Ovary (tissue), 10 donors: ENCODE measurements at regions of chr14 and their contacts with region 1.

Region 1: DNA sequence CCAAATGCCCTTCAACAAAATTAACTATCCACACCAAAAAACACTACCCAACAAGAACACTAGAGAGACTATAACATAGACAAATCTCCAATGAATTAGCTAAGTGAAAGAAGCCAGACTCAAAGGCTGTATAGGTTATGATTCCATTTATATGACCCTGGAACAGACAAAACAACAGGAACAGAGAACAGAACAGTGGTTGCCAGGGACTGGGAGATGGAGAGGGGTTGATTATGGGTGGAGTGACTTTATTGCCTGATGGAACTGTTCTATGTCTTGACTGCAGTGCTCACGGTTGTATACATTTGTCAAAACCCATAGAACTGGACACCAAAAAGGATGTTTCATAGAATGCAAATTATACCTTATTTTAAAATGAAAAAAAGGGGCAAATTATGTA is 14.9 kb downstream of the CATSPERB start:
- DNase-seq: no peak
- H3K4me3 ChIP-seq: no peak overlapping the region
- H3K27ac ChIP-seq: no peak overlapping the region
- H3K4me1 ChIP-seq: no peaks in the 10 kb centered on the region
- H3K27me3 ChIP-seq: no peaks in the 10 kb centered on the region
- CTCF ChIP-seq: no peak
- EP300 ChIP-seq: no peak
- POLR2A ChIP-seq: no peak

Region 2: GRCh38 chr14:91649930-91650329 is 67.1 kb before region 1 on chr14:
- intact Hi-C with region 1: no loop called
- DNase-seq: no peak
- H3K4me3 ChIP-seq: no peak overlapping the region
- H3K27ac ChIP-seq: no peak overlapping the region
- H3K4me1 ChIP-seq: no peaks in the 10 kb centered on the region
- H3K27me3 ChIP-seq: no peaks in the 10 kb centered on the region
- CTCF ChIP-seq: peak in 2 of 3 donors; percentile 36 to 49
- EP300 ChIP-seq: no peak
- POLR2A ChIP-seq: no peak

Region 3: DNA sequence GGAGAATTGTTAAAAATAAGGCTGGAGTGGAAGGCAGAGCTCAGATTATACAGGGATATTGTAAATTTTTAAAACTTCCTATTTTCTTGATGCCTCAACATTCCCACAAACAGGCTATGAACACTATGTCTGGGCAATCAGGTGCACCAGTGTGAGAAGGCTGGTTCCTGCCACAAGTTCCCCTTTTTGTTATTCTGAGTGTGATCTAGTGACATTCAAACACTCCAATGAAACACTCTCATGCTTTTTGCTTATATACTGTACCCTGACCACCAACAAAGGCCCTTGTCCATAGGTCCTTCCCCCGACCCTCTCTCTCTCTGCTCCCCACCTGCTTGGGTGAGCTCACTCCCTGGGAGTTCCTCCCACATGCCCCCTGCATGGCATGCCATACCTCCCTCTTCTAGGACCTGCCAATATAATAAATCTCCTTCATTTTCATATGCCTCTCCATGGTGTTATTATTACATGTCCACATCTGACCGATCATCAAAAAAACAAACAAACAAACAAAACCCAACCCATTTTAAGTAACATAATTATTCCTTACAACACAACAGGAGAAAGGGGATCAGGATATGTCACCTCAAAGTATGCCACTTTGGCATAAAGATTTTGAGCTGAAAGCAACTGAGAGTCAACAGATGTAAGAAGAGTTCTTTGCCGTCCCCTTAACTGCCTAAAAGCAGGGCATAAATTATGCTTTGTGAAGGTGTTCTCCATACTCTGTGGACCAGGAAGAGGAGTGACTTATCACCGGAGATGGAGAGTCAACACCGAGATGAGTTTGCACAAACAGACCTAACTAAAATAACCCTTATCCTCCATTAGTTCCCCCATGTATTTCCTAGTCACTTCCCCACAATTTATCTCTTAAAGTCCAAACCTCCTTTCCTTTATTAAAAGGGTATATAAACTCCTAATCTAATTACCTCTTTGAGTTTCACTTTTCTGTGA is 57.4 kb after region 1 on chr14:
- intact Hi-C with region 1: loop called in 1 of 4 experiments (anchors 2 kb)
- DNase-seq: no peak
- H3K4me3 ChIP-seq: no peak overlapping the region
- H3K27ac ChIP-seq: no peak overlapping the region
- H3K4me1 ChIP-seq: no peaks in the 10 kb centered on the region
- H3K27me3 ChIP-seq: no peaks in the 10 kb centered on the region
- CTCF ChIP-seq: no peak
- EP300 ChIP-seq: no peak
- POLR2A ChIP-seq: no peak